ENCODE measurements at regions of chr17 and their contacts with region 1.

Region 1: DNA sequence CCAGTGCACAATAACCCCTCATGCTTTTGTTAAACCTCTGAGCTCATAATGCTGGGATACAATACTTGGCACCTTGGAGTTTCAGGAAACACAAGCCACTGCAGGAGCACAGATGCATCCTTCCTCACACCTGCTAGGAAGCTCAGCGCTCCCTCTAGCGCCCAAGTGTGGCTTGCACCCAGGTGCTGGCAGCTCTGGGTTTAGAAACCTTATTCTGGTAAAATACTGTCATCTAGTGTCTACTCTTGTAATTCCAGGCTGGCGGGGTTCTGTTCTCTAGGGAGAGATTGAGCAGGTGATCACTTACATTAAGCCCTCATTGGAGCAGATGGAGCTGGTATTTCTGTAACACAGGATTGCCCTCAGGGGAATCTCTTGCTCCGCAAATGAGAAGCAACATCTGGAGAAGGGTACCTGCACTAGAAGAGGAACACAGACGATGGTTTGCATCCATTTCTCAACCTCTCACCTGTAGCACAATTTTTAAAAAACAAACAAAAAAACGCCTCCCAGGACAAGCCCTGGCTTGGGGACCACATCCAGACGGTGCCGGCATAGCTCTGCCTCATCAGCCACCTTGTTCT is 1.5 kb downstream of the CCL1 start:
- DNase-seq: peak; percentile 82
- H3K4me3 ChIP-seq: no peak overlapping the region; a peak in 1 of 4 replicates
- H3K27ac ChIP-seq: no peak overlapping the region
- H3K4me1 ChIP-seq: no peaks in the 10 kb centered on the region
- H3K27me3 ChIP-seq: no peaks in the 10 kb centered on the region; the same call in 1 of the 2 replicates
- CTCF ChIP-seq: peak; percentile 100
- EP300 ChIP-seq: no peak
- RAD21 ChIP-seq: peak; percentile 100

Region 2: DNA sequence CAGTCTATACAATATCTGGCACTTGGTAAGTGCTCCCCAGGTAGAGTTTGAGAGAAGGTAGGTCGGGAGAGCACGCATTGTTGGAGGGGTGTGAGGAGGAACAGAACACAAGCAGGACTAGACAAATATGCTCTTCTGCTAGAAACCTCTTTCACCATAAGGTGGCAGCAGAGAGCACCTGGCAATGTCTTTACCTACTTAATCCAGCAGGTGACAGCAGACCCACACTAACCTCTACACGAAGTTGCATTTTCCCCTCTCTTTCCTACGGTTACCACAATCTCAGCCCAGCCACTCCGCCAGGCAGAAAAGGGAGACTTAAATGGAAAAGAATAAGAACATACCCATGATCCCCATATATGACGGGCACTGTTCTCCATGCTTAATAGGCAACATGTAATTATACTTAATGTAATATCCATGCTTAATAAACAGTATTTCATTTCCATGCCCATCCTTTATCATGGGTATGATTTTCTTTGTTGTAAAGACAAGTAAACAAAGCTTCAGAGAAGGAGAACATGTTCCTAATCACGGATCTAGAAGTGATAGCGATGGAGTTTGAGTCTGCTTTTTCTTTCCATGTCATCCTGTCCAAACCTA is 161.5 kb before region 1 on chr17:
- CTCF ChIA-PET with region 1: interaction called, 350 read pairs
- POLR2A ChIA-PET with region 1: no interaction called
- DNase-seq: peak; percentile 79
- H3K4me3 ChIP-seq: peak overlapping the region in 1 of 2 experiments; percentile 21; a peak in 1 of 4 replicates
- H3K27ac ChIP-seq: no peak overlapping the region
- H3K4me1 ChIP-seq: no peaks in the 10 kb centered on the region
- H3K27me3 ChIP-seq: no peaks in the 10 kb centered on the region
- CTCF ChIP-seq: peak; percentile 99
- EP300 ChIP-seq: no peak
- RAD21 ChIP-seq: peak; percentile 100

Region 3: GRCh38 chr17:34248511-34249024 is 113.0 kb before region 1 on chr17:
- CTCF ChIA-PET with region 1: interaction called, 12 read pairs
- POLR2A ChIA-PET with region 1: no interaction called
- DNase-seq: no peak
- H3K4me3 ChIP-seq: no peak overlapping the region
- H3K27ac ChIP-seq: peak overlapping the region; percentile 34 to 98
- H3K4me1 ChIP-seq: peaks cover 23 to 49% of the 10 kb centered on the region in 2 experiments
- H3K27me3 ChIP-seq: no peaks in the 10 kb centered on the region
- CTCF ChIP-seq: no peak
- EP300 ChIP-seq: peak in 1 of 2 experiments; percentile 65; a peak in 1 of 4 replicates
- RAD21 ChIP-seq: no peak

Region 4: DNA sequence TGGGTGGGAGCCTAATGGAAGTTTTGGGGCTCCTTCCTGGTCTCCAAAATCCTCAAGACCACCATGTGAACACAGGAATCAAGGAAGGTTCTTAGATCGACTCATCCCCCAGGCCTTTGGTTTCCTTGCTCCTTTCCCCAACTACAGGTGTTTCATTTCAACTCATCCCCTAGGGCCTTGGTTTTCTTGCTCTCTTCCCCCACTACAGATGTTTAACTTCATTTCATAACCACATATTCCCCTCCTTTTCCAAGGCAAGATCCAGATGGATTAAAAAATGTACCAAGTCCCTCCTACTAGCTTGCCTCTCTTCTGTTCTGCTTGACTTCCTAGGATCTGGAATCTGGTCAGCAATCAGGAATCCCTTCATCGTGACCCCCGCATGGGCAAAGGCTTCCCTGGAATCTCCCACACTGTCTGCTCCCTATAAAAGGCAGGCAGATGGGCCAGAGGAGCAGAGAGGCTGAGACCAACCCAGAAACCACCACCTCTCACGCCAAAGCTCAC is 76.2 kb before region 1 on chr17 and contains the start of gene CCL11:
- CTCF ChIA-PET with region 1: interaction called, 22 read pairs
- POLR2A ChIA-PET with region 1: no interaction called
- DNase-seq: no peak
- H3K4me3 ChIP-seq: no peak within 1 kb of the TSS
- H3K27ac ChIP-seq: no peak within 1 kb of the TSS
- H3K4me1 ChIP-seq: no peaks in the 10 kb centered on the region
- H3K27me3 ChIP-seq: no peaks in the 10 kb centered on the region; the same call in 1 of the 2 replicates
- CTCF ChIP-seq: no peak
- EP300 ChIP-seq: no peak
- RAD21 ChIP-seq: no peak
- polyA plus RNA-seq, gene CCL11: not detected in 2 replicates

Region 5: GRCh38 chr17:34337701-34338100 is 23.9 kb before region 1 on chr17:
- CTCF ChIA-PET with region 1: interaction called, 45 read pairs
- POLR2A ChIA-PET with region 1: no interaction called
- DNase-seq: no peak
- H3K4me3 ChIP-seq: no peak overlapping the region
- H3K27ac ChIP-seq: no peak overlapping the region
- H3K4me1 ChIP-seq: no peaks in the 10 kb centered on the region
- H3K27me3 ChIP-seq: no peaks in the 10 kb centered on the region
- CTCF ChIP-seq: no peak
- EP300 ChIP-seq: no peak
- RAD21 ChIP-seq: no peak

Region 6: DNA sequence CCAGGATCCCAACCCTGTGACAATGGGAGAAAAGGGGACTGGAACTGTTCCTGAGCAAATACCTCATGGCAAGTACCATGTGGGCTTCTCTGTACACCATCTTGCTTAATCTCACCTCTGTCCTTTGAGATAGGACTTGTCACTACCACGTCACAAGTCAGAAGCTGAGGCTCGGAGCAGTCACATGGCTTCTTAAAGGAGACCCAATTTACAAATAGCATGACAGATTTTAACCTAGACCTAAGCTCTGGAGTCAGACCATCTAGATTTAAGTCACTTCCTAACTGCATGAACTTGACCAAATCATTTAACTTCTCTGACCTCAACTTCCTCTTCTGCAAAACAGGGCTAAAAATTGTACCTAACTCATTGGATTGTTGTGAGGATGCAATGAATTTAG is 37.4 kb after region 1 on chr17:
- CTCF ChIA-PET with region 1: interaction called, 16 read pairs
- POLR2A ChIA-PET with region 1: no interaction called
- DNase-seq: no peak
- H3K4me3 ChIP-seq: no peak overlapping the region
- H3K27ac ChIP-seq: no peak overlapping the region
- H3K4me1 ChIP-seq: no peaks in the 10 kb centered on the region
- H3K27me3 ChIP-seq: no peaks in the 10 kb centered on the region
- CTCF ChIP-seq: no peak
- EP300 ChIP-seq: no peak
- RAD21 ChIP-seq: no peak

Measured in SK-N-SH (cell line).